H1 (cell line): ENCODE measurements at regions of chr11 and their contacts with region 1.

Region 1: GRCh38 chr11:61392981-61393595 is 701 bp downstream of the TMEM216 start:
- DNase-seq: no peak
- H3K4me3 ChIP-seq: peak overlapping the region; percentile 76 to 98 (median 83)
- H3K27ac ChIP-seq: no peak overlapping the region
- H3K4me1 ChIP-seq: peaks cover 0 to 2% (median 0%) of the 10 kb centered on the region in 4 experiments; a peak in 2 of 7 replicates
- H3K27me3 ChIP-seq: no peaks in the 10 kb centered on the region
- CTCF ChIP-seq: peak in 1 of 3 experiments; percentile 12; a peak in 1 of 4 replicates
- EP300 ChIP-seq: no peak
- POLR2A ChIP-seq: no peak
- RAD21 ChIP-seq: peak; percentile 18; a peak in 2 of 4 replicates

Region 2: GRCh38 chr11:61332797-61333549 is 60.1 kb before region 1 on chr11 and contains the starts of genes DDB1 and TKFC:
- CTCF ChIA-PET with region 1: interaction called, 290 read pairs
- POLR2A ChIA-PET with region 1: interaction called, 1,106 read pairs
- DNase-seq: peak; percentile 84 to 99
- H3K4me3 ChIP-seq: peak within 1 kb of the TSS; percentile 79 to 96 (median 92)
- H3K27ac ChIP-seq: peak within 1 kb of the TSS; percentile 96
- H3K4me1 ChIP-seq: peaks cover 5 to 14% (median 9%) of the 10 kb centered on the region in 4 experiments
- H3K27me3 ChIP-seq: no peaks in the 10 kb centered on the region
- CTCF ChIP-seq: no peak
- EP300 ChIP-seq: no peak
- POLR2A ChIP-seq: peak; percentile 94 to 96
- RAD21 ChIP-seq: no peak
- total RNA-seq, gene DDB1: 275 and 283 TPM in 2 replicates
- total RNA-seq, gene TKFC: 53.5 and 56.0 TPM in 2 replicates

Region 3: DNA sequence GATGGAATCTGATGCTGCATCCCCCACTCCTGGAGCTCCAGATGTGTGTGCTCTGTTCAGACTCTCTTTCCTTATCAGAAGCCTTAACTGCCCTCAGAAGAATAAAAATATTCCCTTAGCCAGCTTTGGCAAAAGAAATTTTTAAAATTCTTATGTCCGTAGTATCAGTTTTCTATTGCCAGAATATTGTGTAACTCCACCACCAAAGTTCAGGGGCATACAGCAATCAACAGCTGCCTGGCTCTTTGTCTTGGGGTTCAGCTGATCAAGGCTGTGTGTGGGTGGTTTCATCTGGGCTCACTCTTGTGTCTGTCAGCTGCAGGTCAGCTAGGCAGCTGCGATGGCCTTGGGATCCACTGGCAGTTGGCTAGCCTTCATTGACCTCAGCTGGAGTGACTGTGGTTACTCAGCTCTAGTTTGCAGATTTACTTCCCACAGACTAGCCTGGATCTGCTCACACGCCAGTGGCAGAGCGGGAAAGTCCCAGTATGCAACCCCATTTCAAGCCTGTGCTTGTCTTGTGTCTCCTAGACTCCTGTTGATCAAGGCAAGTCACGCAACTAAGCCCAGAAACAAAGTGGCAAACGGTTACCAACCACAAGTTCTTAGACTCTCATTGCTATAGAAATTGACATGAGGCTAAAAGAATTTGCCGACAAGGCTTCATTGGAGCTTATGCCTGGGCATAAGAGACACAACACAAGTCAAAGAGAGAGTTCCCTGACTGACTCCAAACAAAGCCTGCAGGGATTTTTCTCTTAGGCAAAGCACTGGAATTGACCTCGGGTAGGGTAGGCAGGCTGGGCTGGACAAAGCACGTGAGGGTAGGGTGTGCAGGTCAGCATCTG is 23.5 kb before region 1 on chr11:
- CTCF ChIA-PET with region 1: interaction called, 3 read pairs
- POLR2A ChIA-PET with region 1: interaction called, 1,106 read pairs
- DNase-seq: no peak
- H3K4me3 ChIP-seq: no peak overlapping the region
- H3K27ac ChIP-seq: no peak overlapping the region
- H3K4me1 ChIP-seq: no peaks in the 10 kb centered on the region
- H3K27me3 ChIP-seq: no peaks in the 10 kb centered on the region
- CTCF ChIP-seq: no peak
- EP300 ChIP-seq: no peak
- POLR2A ChIP-seq: peak in 1 of 2 experiments; percentile 6; a peak in 1 of 3 replicates
- RAD21 ChIP-seq: no peak

Region 4: GRCh38 chr11:61406067-61406466 is 13.0 kb after region 1 on chr11:
- CTCF ChIA-PET with region 1: interaction called, 10 read pairs
- POLR2A ChIA-PET with region 1: interaction called, 60 read pairs
- DNase-seq: no peak
- H3K4me3 ChIP-seq: no peak overlapping the region
- H3K27ac ChIP-seq: no peak overlapping the region
- H3K4me1 ChIP-seq: no peaks in the 10 kb centered on the region
- H3K27me3 ChIP-seq: no peaks in the 10 kb centered on the region
- CTCF ChIP-seq: no peak
- EP300 ChIP-seq: no peak
- POLR2A ChIP-seq: no peak
- RAD21 ChIP-seq: no peak

Region 5: DNA sequence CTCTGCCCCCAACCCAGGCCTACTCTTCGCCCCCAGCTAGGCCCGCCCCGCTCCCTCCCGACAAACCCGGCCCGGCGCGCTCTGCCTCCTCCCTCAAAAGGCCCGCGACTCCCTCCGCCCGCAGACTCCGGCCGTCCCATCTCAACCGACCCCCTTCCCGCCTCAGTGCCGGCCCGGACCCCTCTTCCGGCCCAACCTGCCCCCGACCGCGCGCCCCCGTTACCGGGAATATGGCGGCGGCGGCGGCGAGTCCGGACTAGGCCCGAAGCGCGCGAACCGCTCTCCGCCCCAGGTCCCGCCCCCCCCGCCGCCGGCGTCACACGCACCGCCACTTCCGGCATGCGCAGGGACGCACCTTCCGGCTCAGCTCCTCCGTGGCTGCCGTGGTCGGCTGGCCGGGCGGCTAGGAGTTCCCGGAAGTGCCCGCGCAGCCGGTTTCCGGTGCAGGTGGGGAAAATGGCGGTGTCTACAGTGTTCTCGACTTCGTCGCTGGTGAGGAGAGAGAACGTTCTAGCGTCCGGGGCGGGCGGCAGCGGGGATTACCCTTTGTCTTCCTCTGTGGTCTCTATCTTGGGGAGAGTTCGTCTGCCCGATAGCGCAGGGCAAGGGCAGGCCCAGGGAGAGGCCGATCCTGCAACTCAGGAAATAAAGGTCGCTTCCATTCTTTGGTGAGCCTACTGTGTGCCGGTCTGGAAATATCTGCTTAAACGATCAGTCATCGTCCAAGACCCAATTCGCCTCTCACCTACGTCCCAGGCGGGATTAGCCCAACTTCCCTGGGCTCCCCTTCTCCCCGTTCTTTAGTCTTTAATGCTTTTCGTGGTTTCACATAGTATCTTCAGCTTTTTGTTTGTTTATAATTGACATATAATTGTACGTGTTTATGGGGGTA is 36.8 kb after region 1 on chr11 and contains the starts of genes CPSF7 and SDHAF2:
- CTCF ChIA-PET with region 1: interaction called, 10 read pairs
- POLR2A ChIA-PET with region 1: interaction called, 33 read pairs
- DNase-seq: peak; percentile 82 to 98
- H3K4me3 ChIP-seq: peak within 1 kb of the TSS; percentile 76 to 94 (median 89)
- H3K27ac ChIP-seq: peak within 1 kb of the TSS; percentile 97
- H3K4me1 ChIP-seq: no peaks in the 10 kb centered on the region; a peak in 1 of 7 replicates
- H3K27me3 ChIP-seq: no peaks in the 10 kb centered on the region
- CTCF ChIP-seq: no peak
- EP300 ChIP-seq: 0 out of 3 replicates have a peak, but pooled peaks of 1 of the 2 experiments have one; percentile 24
- POLR2A ChIP-seq: peak; percentile 78 to 91
- RAD21 ChIP-seq: no peak
- total RNA-seq, gene CPSF7: 95.9 and 96.7 TPM in 2 replicates
- total RNA-seq, gene SDHAF2: 41.0 and 44.8 TPM in 2 replicates